Activated naive CD8-positive, alpha-beta T cell treated with anti-CD3 and anti-CD28 coated beads, Interleukin-2, amount 10 ng/mL, durations not matched to agents 7 days and 5 days (primary cell): ENCODE measurements at regions of chr17 and their contacts with region 1.

Region 1: DNA sequence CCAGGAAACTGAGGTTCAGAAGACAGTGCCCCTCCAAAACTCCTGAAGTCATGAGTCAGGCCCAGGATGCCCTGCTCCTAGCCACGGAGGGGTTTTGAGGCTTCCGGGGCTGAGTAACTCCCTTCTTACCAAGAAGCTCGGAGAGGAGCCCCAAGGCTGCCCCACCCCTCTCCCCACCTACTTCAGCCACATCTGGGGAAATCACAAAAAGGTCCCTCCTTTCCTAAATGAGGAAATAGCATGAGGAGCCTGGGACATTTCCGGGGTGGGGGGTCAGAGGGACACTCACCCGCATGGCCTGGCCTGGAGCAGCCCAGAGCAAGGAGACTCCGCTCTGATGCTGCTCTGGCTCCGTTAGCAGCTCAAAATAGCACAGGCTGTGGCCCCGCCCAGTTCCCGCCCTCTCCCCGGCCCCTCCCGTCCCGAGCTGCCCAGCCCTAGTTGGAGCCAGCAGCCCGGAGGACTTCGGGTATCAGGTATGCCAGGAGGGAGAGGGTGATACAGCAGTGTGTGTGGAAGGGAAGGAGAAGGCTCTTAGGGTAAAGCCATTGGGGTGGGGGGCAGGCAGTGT is 40.1 kb downstream of the MYO18A start:
- DNase-seq: peak; percentile 84
- ATAC-seq: peak; percentile 78
- H3K4me3 Mint-ChIP-seq: peak overlapping the region; percentile 99
- H3K27ac Mint-ChIP-seq: peak overlapping the region; percentile 93
- H3K4me1 Mint-ChIP-seq: peaks cover 54% of the 10 kb centered on the region
- H3K27me3 Mint-ChIP-seq: no peaks in the 10 kb centered on the region

Region 2: GRCh38 chr17:28951991-28952975 is 187.9 kb before region 1 on chr17:
- POLR2A ChIA-PET with region 1: interaction called, 11 read pairs
- DNase-seq: peak; percentile 88
- ATAC-seq: peak; percentile 67
- H3K4me3 Mint-ChIP-seq: no peak overlapping the region
- H3K27ac Mint-ChIP-seq: no peak overlapping the region
- H3K4me1 Mint-ChIP-seq: peaks cover 19% of the 10 kb centered on the region
- H3K27me3 Mint-ChIP-seq: no peaks in the 10 kb centered on the region

Region 3: GRCh38 chr17:29089601-29090044 is 50.5 kb before region 1 on chr17:
- POLR2A ChIA-PET with region 1: no interaction called
- DNase-seq: no peak
- ATAC-seq: no peak
- H3K4me3 Mint-ChIP-seq: no peak overlapping the region
- H3K27ac Mint-ChIP-seq: no peak overlapping the region
- H3K4me1 Mint-ChIP-seq: no peaks in the 10 kb centered on the region
- H3K27me3 Mint-ChIP-seq: no peaks in the 10 kb centered on the region

Region 4: GRCh38 chr17:29124117-29124924 is 15.8 kb before region 1 on chr17:
- POLR2A ChIA-PET with region 1: interaction called, 51 read pairs
- DNase-seq: no peak
- ATAC-seq: peak; percentile 94
- H3K4me3 Mint-ChIP-seq: no peak overlapping the region
- H3K27ac Mint-ChIP-seq: no peak overlapping the region
- H3K4me1 Mint-ChIP-seq: peaks cover 2% of the 10 kb centered on the region
- H3K27me3 Mint-ChIP-seq: no peaks in the 10 kb centered on the region

Region 5: DNA sequence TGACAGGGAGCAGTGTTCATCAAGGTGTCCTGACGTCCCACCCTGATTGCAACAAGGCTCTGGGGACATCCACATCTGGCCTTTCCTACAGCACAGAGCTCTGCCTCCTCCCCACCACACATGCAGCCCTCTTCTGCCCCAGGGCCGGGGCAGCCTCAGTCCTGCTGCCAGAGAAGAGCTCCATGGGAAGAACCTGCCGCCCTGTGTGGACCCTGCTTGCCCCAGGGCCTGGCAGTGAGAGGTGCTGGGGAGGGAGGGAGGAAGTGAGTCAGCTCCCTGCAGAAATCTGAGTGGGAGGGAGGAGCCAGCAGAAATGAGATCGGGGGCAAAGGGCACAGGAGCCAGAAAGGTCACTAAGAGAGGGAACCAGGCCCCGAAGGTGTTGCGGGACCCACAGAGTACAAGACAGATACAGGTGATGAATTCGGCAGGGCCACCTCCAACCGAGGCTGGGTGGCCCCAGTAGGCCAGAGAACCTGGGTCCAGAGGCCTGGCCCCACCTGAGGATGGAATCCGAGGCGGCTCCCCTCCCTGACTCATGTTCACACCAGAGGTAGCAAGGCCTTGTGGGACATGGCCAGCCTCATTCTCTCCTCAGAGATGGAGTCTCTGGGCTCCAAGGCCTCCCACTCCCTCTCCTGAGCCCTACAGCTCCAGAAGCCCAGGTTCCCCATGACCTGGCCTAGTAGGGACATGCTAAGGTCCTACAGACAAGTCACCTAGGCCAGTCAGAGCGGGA is 15.3 kb after region 1 on chr17:
- POLR2A ChIA-PET with region 1: interaction called, 30 read pairs
- DNase-seq: peak; percentile 61
- ATAC-seq: peak; percentile 95
- H3K4me3 Mint-ChIP-seq: peak overlapping the region; percentile 57
- H3K27ac Mint-ChIP-seq: peak overlapping the region; percentile 85
- H3K4me1 Mint-ChIP-seq: peaks cover 34% of the 10 kb centered on the region
- H3K27me3 Mint-ChIP-seq: no peaks in the 10 kb centered on the region

Region 6: DNA sequence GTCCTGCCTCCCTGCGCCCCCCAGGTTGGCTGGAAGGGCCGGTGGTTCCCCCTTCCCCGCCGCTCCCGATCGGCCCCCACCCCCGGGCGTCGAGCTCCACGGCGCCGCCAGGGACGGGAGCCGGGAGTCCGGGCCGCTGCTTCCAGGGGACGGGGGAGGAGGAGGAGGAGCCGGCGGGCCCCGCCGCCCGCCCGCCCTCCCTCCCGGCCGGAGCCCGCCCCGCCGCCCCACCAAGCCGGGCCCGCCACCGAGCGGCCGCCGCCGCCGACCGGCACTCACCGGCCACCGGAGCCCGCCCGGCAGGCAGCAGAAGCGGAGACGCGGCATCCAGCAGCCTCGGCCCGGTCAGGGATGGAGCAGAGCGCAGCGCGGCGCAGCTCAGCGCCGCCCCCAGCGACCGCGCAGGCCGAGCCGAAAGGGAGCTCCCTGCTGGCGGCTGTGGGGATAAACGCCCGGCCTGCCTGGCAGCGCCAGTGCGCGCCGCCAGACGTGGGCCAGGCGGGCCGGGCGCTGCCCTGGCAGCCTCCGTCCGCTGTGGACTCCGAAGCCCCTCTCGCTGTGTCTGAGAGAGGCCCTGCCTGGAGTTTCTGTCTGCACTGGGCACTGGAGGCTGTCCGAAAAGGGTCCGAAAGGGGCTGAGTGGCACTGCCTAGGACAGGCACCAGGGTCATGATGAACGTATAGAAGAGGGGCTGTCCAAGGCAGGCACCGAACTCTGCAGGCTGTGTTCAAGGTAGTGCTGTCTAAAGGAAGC is 40.1 kb after region 1 on chr17 and contains the start of gene MYO18A:
- POLR2A ChIA-PET with region 1: interaction called, 22 read pairs
- DNase-seq: peak; percentile 90
- ATAC-seq: peak; percentile 93
- H3K4me3 Mint-ChIP-seq: peak within 1 kb of the TSS; percentile 49
- H3K27ac Mint-ChIP-seq: peak within 1 kb of the TSS; percentile 12
- H3K4me1 Mint-ChIP-seq: peaks cover 29% of the 10 kb centered on the region
- H3K27me3 Mint-ChIP-seq: peaks cover 12% of the 10 kb centered on the region
- total RNA-seq, gene MYO18A: 79.7 to 80.6 TPM

Region 7: GRCh38 chr17:29212681-29213121 is 72.6 kb after region 1 on chr17:
- POLR2A ChIA-PET with region 1: no interaction called
- DNase-seq: no peak
- ATAC-seq: no peak
- H3K4me3 Mint-ChIP-seq: no peak overlapping the region
- H3K27ac Mint-ChIP-seq: no peak overlapping the region
- H3K4me1 Mint-ChIP-seq: no peaks in the 10 kb centered on the region
- H3K27me3 Mint-ChIP-seq: peaks cover 6% of the 10 kb centered on the region

Region 8: GRCh38 chr17:29293890-29294579 is 153.9 kb after region 1 on chr17 and contains the start of gene NUFIP2:
- POLR2A ChIA-PET with region 1: interaction called, 28 read pairs
- DNase-seq: peak; percentile 96
- ATAC-seq: peak; percentile 89
- H3K4me3 Mint-ChIP-seq: peak within 1 kb of the TSS; percentile 99
- H3K27ac Mint-ChIP-seq: peak within 1 kb of the TSS; percentile 100
- H3K4me1 Mint-ChIP-seq: peaks cover 31% of the 10 kb centered on the region
- H3K27me3 Mint-ChIP-seq: peaks cover 3% of the 10 kb centered on the region
- total RNA-seq, gene NUFIP2: 64.7 to 68.4 TPM